HepG2 (cell line): ENCODE measurements at regions of chrX and their contacts with region 1.

Region 1: GRCh38 chrX:132740316-132741123 is 217.9 kb downstream of the HS6ST2 start:
- DNase-seq: no peak
- ATAC-seq: no peak
- H3K4me3 ChIP-seq: no peak overlapping the region
- H3K27ac ChIP-seq: no peak overlapping the region
- H3K4me1 ChIP-seq: no peaks in the 10 kb centered on the region
- H3K27me3 ChIP-seq: no peaks in the 10 kb centered on the region
- CTCF ChIP-seq: peak; percentile 40; the same call in 1 of the 2 replicates
- EP300 ChIP-seq: no peak
- POLR2A ChIP-seq: no peak
- RAD21 ChIP-seq: no peak

Region 2: DNA sequence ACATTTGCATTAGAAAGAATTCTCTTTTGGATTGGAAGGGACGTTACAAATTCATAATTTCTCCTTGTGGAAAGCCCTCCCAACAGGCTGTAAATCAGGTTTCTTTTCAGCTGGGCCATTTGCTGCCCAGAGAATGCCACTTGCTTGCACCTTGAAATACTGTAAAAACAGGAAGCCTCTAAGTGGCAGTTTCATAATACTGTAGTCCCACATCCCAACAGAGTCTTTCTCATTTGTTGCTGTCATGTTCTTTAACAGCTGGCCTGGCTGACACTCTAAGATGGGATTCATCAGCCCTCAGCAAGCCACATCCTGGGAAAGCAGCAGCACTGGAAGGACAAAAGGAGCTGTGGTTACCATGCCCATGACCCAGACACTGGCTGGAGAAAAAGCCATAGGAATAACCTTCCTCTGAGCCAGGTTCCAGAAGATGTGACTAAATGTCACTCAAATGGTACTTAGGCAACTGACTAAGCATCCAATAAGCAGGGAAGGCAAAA is 29.8 kb before region 1 on chrX:
- CTCF ChIA-PET with region 1: no interaction called
- POLR2A ChIA-PET with region 1: no interaction called
- in situ Hi-C with region 1: no loop called
- intact Hi-C with region 1: no loop called
- DNase-seq: no peak
- ATAC-seq: no peak
- H3K4me3 ChIP-seq: no peak overlapping the region
- H3K27ac ChIP-seq: no peak overlapping the region
- H3K4me1 ChIP-seq: no peaks in the 10 kb centered on the region
- H3K27me3 ChIP-seq: no peaks in the 10 kb centered on the region
- CTCF ChIP-seq: no peak
- EP300 ChIP-seq: no peak
- POLR2A ChIP-seq: no peak
- RAD21 ChIP-seq: no peak

Region 3: DNA sequence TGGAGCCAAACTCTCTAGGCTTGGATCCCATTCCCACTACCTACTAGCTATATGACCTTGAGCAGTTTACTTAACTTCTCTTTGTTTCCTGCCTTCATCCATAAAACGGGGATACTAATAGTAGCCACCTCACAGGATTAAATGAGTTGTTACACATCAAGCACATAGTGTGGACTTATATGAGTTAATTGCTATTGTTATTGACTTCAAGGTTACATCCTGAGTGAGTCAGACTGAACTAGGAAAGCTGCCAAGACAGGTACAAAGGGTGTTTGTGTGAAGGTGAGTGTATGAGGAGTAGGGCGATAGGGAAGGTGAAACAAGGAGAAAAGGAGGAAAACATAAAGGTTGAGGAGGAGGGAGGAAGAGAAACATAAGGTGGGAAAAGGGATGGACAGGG is 445.4 kb after region 1 on chrX:
- CTCF ChIA-PET with region 1: no interaction called
- POLR2A ChIA-PET with region 1: no interaction called
- in situ Hi-C with region 1: loop called (anchors 25 kb)
- intact Hi-C with region 1: no loop called
- DNase-seq: peak; percentile 24
- ATAC-seq: no peak
- H3K4me3 ChIP-seq: no peak overlapping the region
- H3K27ac ChIP-seq: no peak overlapping the region
- H3K4me1 ChIP-seq: peaks cover 20% of the 10 kb centered on the region
- H3K27me3 ChIP-seq: no peaks in the 10 kb centered on the region
- CTCF ChIP-seq: no peak
- EP300 ChIP-seq: no peak
- POLR2A ChIP-seq: no peak
- RAD21 ChIP-seq: no peak